A549 (cell line): ENCODE measurements at regions of chr17 and their contacts with region 1.

Region 1: DNA sequence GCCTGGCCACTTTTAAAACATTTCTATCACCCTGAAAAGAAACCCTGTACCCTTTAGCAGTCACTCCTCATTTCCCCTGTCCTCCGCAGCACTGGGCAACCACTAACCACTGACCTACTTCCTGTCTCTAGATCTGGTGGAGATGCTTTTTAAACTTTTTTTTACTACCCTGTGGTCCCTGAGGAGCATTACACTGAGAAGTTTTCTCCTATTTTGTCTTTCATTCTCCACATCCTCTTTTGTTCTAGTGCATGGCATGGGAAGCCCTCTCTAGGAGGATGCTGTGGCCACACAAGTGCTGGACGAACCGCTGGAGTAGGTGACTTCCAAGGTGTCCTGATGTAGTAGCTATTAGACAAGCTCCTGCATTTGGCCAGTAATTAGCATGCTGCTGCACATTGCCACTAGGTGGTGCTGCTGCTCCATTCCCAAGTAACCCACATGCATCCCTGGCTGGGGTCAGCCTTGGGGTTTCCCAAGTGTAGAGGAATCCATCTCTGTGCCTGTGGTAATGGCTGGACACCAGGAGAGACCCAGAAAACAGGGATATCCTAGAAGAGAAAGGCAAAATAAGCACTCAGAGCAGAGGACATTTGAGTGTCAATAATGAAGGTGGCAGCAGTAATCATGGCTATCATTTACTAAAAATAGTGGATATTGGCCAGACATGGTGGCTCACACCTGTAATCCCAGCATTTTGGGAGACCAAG is 143.8 kb upstream of the CRHR1 start:
- DNase-seq: peak; percentile 81 to 88
- ATAC-seq: peak; percentile 96
- H3K4me3 ChIP-seq: no peak overlapping the region
- H3K27ac ChIP-seq: no peak overlapping the region
- H3K4me1 ChIP-seq: no peaks in the 10 kb centered on the region
- CTCF ChIP-seq: peak; percentile 99
- EP300 ChIP-seq: no peak
- POLR2A ChIP-seq: no peak
- RAD21 ChIP-seq: peak; percentile 97 to 99

Region 2: GRCh38 chr17:45660474-45660873 is 20.2 kb after region 1 on chr17:
- CTCF ChIA-PET with region 1: interaction called, 95 read pairs
- POLR2A ChIA-PET with region 1: no interaction called
- DNase-seq: no peak
- ATAC-seq: no peak
- H3K4me3 ChIP-seq: no peak overlapping the region
- H3K27ac ChIP-seq: no peak overlapping the region
- H3K4me1 ChIP-seq: no peaks in the 10 kb centered on the region
- CTCF ChIP-seq: no peak
- EP300 ChIP-seq: no peak
- POLR2A ChIP-seq: no peak
- RAD21 ChIP-seq: no peak

Region 3: GRCh38 chr17:45700171-45701090 is 60.1 kb after region 1 on chr17:
- CTCF ChIA-PET with region 1: interaction called, 10 read pairs
- POLR2A ChIA-PET with region 1: no interaction called
- DNase-seq: no peak
- ATAC-seq: no peak
- H3K4me3 ChIP-seq: no peak overlapping the region
- H3K27ac ChIP-seq: no peak overlapping the region
- H3K4me1 ChIP-seq: peaks cover 27% of the 10 kb centered on the region
- CTCF ChIP-seq: no peak
- EP300 ChIP-seq: no peak
- POLR2A ChIP-seq: no peak
- RAD21 ChIP-seq: no peak

Region 4: GRCh38 chr17:45782889-45783592 is 142.7 kb after region 1 on chr17:
- CTCF ChIA-PET with region 1: interaction called, 39 read pairs
- POLR2A ChIA-PET with region 1: no interaction called
- DNase-seq: peak; percentile 58 to 76
- ATAC-seq: peak; percentile 64 to 89
- H3K4me3 ChIP-seq: peak overlapping the region; percentile 50
- H3K27ac ChIP-seq: peak overlapping the region in 1 of 2 experiments; percentile 75; a peak in 2 of 6 replicates
- H3K4me1 ChIP-seq: peaks cover 5% of the 10 kb centered on the region; the same call in 1 of the 3 replicates
- CTCF ChIP-seq: peak; percentile 79
- EP300 ChIP-seq: no peak
- POLR2A ChIP-seq: no peak
- RAD21 ChIP-seq: peak; percentile 24 to 38; a peak in 3 of 5 replicates

Region 5: DNA sequence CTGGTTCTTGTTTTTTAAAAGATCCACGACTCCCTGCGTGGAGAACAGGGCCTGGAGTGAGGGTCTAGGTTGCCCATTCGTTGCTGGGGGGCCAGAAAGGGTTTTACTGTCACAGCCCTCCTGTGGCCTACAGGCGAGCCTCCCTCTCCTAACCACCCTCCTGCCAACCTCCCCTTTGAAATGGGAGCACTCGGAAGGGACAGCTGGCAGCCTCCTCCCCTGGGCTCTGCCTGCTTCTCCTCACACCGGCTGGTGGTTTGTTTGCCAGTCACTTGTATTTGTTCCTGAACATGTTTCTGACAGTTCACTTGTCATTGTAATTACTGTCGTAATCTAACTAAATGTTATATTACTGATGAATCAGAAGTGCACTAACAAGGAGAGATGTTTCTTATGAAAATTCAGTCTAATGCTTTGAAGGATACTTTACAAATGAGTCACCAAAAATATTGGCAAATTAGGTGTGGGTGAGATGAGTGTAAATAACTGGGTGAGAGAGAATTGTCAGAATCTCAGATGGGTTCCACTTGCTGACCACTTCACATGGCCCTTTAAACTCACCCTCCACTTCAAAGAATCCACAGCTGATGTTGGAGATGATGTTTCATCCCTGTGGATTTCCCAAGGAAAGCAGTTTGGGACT is 201.7 kb after region 1 on chr17:
- CTCF ChIA-PET with region 1: interaction called, 317 read pairs
- POLR2A ChIA-PET with region 1: no interaction called
- DNase-seq: no peak
- ATAC-seq: no peak
- H3K4me3 ChIP-seq: no peak overlapping the region
- H3K27ac ChIP-seq: no peak overlapping the region
- H3K4me1 ChIP-seq: no peaks in the 10 kb centered on the region
- CTCF ChIP-seq: no peak
- EP300 ChIP-seq: no peak
- POLR2A ChIP-seq: no peak
- RAD21 ChIP-seq: no peak

Region 6: DNA sequence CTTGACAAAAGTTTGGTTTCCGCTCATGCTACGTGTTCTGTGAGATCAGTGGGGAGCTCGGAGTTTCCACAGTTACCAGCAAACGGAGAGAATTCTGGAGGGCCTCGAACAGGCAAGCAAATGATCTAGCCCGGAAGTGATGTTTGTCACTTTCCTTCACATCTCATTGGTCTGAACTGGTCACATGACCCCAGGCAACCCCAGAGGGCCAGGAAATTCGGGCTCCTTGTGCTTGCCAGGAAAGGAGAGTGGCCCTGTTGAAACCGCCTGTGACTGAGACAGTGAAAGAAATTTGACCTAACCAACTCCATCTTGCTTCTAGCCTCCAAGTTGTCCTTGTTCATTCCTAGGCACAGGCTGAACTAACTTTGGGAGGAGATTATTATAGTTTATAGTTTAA is 227.4 kb after region 1 on chr17:
- CTCF ChIA-PET with region 1: interaction called, 10 read pairs
- POLR2A ChIA-PET with region 1: no interaction called
- DNase-seq: no peak
- ATAC-seq: no peak
- H3K4me3 ChIP-seq: no peak overlapping the region
- H3K27ac ChIP-seq: no peak overlapping the region
- H3K4me1 ChIP-seq: no peaks in the 10 kb centered on the region
- CTCF ChIP-seq: no peak
- EP300 ChIP-seq: no peak
- POLR2A ChIP-seq: no peak
- RAD21 ChIP-seq: no peak